ENCODE measurements at regions of chr9 and their contacts with region 1.

Region 1: GRCh38 chr9:104494808-104495207 is 9.3 kb upstream of the OR13F1 start:
- DNase-seq: peak; percentile 33
- ATAC-seq: no peak
- H3K4me3 ChIP-seq: no peak overlapping the region
- H3K27ac ChIP-seq: no peak overlapping the region
- H3K4me1 ChIP-seq: no peaks in the 10 kb centered on the region
- H3K27me3 ChIP-seq: no peaks in the 10 kb centered on the region
- CTCF ChIP-seq: peak; percentile 44

Region 2: DNA sequence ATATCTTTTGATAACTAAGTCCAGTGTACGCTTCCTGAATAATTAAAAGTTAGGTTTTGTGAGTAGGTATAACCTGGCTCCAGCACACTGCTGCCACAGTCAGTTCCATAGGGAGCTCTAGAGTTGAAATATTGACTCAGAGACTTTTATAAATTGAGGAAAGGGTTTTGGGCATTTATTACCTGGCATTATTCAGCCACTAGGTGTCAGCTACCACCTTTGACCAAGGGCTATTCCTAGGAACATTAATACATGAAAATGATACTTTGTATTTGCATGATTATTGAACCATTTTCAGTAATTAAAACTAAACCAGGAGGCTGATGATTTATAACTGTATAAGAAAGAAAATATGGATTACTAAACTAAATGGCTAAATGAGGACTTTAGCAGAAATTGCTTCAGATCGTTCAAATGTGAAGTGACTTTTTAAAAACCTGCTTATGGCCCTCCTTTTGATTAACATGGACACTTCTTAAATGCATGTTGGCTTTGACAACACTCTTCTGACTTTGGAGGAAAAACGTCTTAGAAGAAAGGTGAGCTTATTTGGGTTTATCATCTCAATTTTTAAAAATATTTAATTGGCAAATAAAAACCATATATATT is 317.7 kb before region 1 on chr9:
- CTCF ChIA-PET with region 1: no interaction called
- POLR2A ChIA-PET with region 1: no interaction called
- intact Hi-C with region 1: loop called (anchors 5 kb)
- DNase-seq: peak; percentile 42
- ATAC-seq: 0 out of 2 replicates have a peak, but pooled peaks have one; percentile 27
- H3K4me3 ChIP-seq: no peak overlapping the region
- H3K27ac ChIP-seq: no peak overlapping the region
- H3K4me1 ChIP-seq: no peaks in the 10 kb centered on the region
- H3K27me3 ChIP-seq: no peaks in the 10 kb centered on the region
- CTCF ChIP-seq: peak; percentile 58

Region 3: DNA sequence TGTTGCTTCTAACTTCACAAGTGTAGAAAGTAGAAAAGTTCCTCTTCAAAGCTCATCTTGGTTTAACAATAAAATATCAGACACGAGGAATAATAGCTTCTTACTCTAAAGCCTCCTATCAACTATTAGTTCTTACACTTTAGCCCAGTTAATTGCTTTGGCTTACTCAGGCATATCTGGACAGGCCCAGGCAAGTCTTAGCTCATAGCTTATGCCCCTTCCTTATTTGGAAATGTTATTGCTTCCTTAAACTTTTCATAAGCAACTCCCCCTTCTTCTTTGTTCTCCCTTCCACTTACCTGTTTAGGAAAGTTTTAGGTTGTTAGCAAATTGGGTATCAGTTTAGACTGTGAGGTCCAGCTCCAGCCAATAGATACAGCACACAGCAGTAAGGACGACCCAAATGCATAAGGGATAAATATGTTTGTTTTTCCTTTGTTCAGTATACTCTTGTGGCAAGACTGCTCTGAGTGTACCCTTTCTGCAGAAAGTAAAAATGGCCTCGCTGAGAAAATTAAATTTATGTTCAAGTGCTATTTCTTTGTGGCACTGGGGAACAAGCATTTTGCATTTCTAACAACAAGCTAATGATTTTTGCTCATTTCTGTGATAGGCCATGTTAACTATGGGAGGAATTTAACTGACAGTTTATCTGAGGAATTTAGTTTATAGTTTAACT is 238.6 kb before region 1 on chr9:
- CTCF ChIA-PET with region 1: no interaction called
- POLR2A ChIA-PET with region 1: no interaction called
- intact Hi-C with region 1: no loop called
- DNase-seq: no peak
- ATAC-seq: no peak
- H3K4me3 ChIP-seq: no peak overlapping the region
- H3K27ac ChIP-seq: no peak overlapping the region
- H3K4me1 ChIP-seq: no peaks in the 10 kb centered on the region
- H3K27me3 ChIP-seq: no peaks in the 10 kb centered on the region
- CTCF ChIP-seq: no peak

Region 4: DNA sequence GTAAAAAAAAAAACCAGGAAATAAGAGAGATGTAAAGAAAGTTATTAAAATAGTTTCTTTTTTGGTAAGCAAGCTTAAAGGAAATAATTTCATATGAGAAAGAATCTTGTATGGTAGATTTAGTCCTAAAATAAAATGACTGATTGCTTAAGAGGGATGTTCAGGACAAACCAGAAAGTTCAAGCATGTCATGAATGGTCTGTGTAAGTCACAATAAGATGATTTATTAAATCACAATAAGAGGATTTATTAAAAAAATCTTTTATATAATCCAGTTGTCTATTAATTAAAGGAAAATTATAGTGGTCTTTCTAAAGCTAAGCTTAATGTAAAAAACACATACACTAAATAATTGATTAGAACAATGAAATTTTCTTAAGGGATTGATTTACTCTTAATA is 82.6 kb before region 1 on chr9:
- CTCF ChIA-PET with region 1: no interaction called
- POLR2A ChIA-PET with region 1: no interaction called
- intact Hi-C with region 1: no loop called
- DNase-seq: peak; percentile 20
- ATAC-seq: no peak
- H3K4me3 ChIP-seq: no peak overlapping the region
- H3K27ac ChIP-seq: no peak overlapping the region
- H3K4me1 ChIP-seq: no peaks in the 10 kb centered on the region
- H3K27me3 ChIP-seq: no peaks in the 10 kb centered on the region
- CTCF ChIP-seq: no peak

Region 5: DNA sequence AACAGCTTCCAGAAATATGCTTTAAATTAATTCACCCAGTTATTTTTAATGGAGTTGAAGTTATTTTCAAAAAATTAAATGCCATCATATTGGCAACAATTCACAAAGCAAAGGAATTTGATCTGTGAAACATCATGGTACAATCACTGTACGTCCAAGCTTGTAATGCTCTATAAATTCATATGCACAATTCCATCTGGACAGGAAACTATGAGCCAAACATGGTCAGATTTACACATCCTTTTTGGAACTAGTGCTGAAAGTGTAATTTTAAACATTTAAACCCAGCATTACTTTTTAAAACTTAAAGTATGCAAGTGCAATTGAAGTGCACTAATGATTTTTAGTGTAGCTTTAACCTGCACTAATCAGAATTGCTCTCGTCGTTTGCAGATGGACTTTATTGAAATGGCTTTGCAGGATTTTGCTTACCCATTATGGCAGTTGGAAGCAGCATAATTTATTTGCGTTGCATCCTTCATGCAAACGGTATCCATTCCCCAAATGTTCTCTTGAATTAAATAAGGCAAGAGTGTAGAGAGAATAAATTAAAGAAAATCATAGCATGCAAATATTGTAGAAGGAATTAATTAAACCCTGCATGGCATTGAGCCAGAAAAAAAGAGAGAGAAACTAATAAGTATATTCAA is 11.8 kb before region 1 on chr9:
- CTCF ChIA-PET with region 1: no interaction called
- POLR2A ChIA-PET with region 1: no interaction called
- intact Hi-C with region 1: no loop called
- DNase-seq: no peak
- ATAC-seq: no peak
- H3K4me3 ChIP-seq: no peak overlapping the region
- H3K27ac ChIP-seq: no peak overlapping the region
- H3K4me1 ChIP-seq: no peaks in the 10 kb centered on the region
- H3K27me3 ChIP-seq: no peaks in the 10 kb centered on the region
- CTCF ChIP-seq: no peak

Region 6: GRCh38 chr9:104608336-104608735 is 113.5 kb after region 1 on chr9:
- CTCF ChIA-PET with region 1: no interaction called
- POLR2A ChIA-PET with region 1: no interaction called
- intact Hi-C with region 1: loop called (anchors 5 kb)
- DNase-seq: peak; percentile 13
- ATAC-seq: no peak
- H3K4me3 ChIP-seq: no peak overlapping the region
- H3K27ac ChIP-seq: no peak overlapping the region
- H3K4me1 ChIP-seq: 0 out of 2 replicates have a peak, but pooled peaks cover 6% of the 10 kb centered on the region
- H3K27me3 ChIP-seq: 0 out of 2 replicates have a peak, but pooled peaks cover 5% of the 10 kb centered on the region
- CTCF ChIP-seq: peak; percentile 48; the same call in 1 of the 2 replicates

Region 7: GRCh38 chr9:104682642-104683041 is 187.8 kb after region 1 on chr9:
- CTCF ChIA-PET with region 1: no interaction called
- POLR2A ChIA-PET with region 1: no interaction called
- intact Hi-C with region 1: loop called (anchors 1 kb)
- DNase-seq: peak; percentile 66
- ATAC-seq: peak; percentile 67
- H3K4me3 ChIP-seq: no peak overlapping the region
- H3K27ac ChIP-seq: no peak overlapping the region
- H3K4me1 ChIP-seq: no peaks in the 10 kb centered on the region
- H3K27me3 ChIP-seq: no peaks in the 10 kb centered on the region
- CTCF ChIP-seq: peak; percentile 65